H1 (cell line): ENCODE measurements at regions of chr11 and their contacts with region 1.

Region 1: GRCh38 chr11:17846852-17847453 is 112.4 kb downstream of the KCNC1 start:
- DNase-seq: no peak
- H3K4me3 ChIP-seq: no peak overlapping the region
- H3K27ac ChIP-seq: no peak overlapping the region
- H3K4me1 ChIP-seq: peaks cover 0 to 4% (median under 1%) of the 10 kb centered on the region in 4 experiments; a peak in 3 of 7 replicates
- H3K27me3 ChIP-seq: no peaks in the 10 kb centered on the region
- CTCF ChIP-seq: peak in 1 of 3 experiments; percentile 14; a peak in 1 of 4 replicates
- EP300 ChIP-seq: no peak
- POLR2A ChIP-seq: no peak
- RAD21 ChIP-seq: peak; percentile 17 to 44; a peak in 1 of 4 replicates

Region 2: GRCh38 chr11:17613428-17613962 is 233.5 kb before region 1 on chr11:
- CTCF ChIA-PET with region 1: no interaction called
- POLR2A ChIA-PET with region 1: no interaction called
- DNase-seq: no peak
- H3K4me3 ChIP-seq: no peak overlapping the region
- H3K27ac ChIP-seq: no peak overlapping the region
- H3K4me1 ChIP-seq: no peaks in the 10 kb centered on the region
- H3K27me3 ChIP-seq: 0 out of 7 replicates have a peak, but pooled peaks cover 0 to 2% (median 0%) of the 10 kb centered on the region in 4 experiments
- CTCF ChIP-seq: no peak
- EP300 ChIP-seq: no peak
- POLR2A ChIP-seq: no peak
- RAD21 ChIP-seq: no peak

Region 3: DNA sequence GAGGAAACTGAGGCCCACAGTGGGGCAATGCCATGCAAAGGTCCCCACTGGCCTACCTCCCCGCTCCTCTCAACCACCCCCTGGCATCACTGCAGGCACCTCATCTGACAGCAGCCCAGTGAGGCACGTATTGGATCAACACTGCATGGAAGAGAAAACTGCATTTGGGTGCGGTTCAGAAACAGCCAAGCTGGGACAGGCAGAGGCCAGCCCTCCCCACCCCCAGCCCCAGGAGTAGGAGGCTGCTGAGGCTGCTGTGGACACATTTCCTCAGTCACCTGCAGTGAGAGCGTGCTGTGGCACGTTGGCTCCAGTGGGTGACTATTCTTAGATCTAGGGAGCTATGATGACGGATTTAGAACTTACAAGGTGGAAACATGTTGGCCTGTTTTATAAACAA is 48.7 kb before region 1 on chr11:
- CTCF ChIA-PET with region 1: no interaction called
- POLR2A ChIA-PET with region 1: no interaction called
- DNase-seq: no peak
- H3K4me3 ChIP-seq: no peak overlapping the region
- H3K27ac ChIP-seq: no peak overlapping the region
- H3K4me1 ChIP-seq: peaks cover 0 to 6% (median 4%) of the 10 kb centered on the region in 4 experiments; a peak in 5 of 7 replicates
- H3K27me3 ChIP-seq: no peaks in the 10 kb centered on the region; a peak in 1 of 7 replicates
- CTCF ChIP-seq: no peak
- EP300 ChIP-seq: no peak
- POLR2A ChIP-seq: no peak
- RAD21 ChIP-seq: no peak

Region 4: GRCh38 chr11:17821648-17822400 is 25.1 kb before region 1 on chr11:
- CTCF ChIA-PET with region 1: interaction called, 23 read pairs
- POLR2A ChIA-PET with region 1: no interaction called
- DNase-seq: no peak
- H3K4me3 ChIP-seq: no peak overlapping the region
- H3K27ac ChIP-seq: no peak overlapping the region
- H3K4me1 ChIP-seq: 0 out of 7 replicates have a peak, but pooled peaks cover 0 to 2% (median 0%) of the 10 kb centered on the region in 4 experiments
- H3K27me3 ChIP-seq: no peaks in the 10 kb centered on the region
- CTCF ChIP-seq: no peak
- EP300 ChIP-seq: no peak
- POLR2A ChIP-seq: no peak
- RAD21 ChIP-seq: no peak

Region 5: GRCh38 chr11:17873586-17873985 is 26.6 kb after region 1 on chr11:
- CTCF ChIA-PET with region 1: interaction called, 13 read pairs
- POLR2A ChIA-PET with region 1: no interaction called
- DNase-seq: no peak
- H3K4me3 ChIP-seq: no peak overlapping the region
- H3K27ac ChIP-seq: 0 out of 2 replicates have a peak overlapping the region, but pooled peaks have one; percentile 6
- H3K4me1 ChIP-seq: peaks cover 0 to 3% (median 3%) of the 10 kb centered on the region in 4 experiments; a peak in 1 of 7 replicates
- H3K27me3 ChIP-seq: no peaks in the 10 kb centered on the region
- CTCF ChIP-seq: no peak
- EP300 ChIP-seq: no peak
- POLR2A ChIP-seq: no peak
- RAD21 ChIP-seq: no peak

Region 6: DNA sequence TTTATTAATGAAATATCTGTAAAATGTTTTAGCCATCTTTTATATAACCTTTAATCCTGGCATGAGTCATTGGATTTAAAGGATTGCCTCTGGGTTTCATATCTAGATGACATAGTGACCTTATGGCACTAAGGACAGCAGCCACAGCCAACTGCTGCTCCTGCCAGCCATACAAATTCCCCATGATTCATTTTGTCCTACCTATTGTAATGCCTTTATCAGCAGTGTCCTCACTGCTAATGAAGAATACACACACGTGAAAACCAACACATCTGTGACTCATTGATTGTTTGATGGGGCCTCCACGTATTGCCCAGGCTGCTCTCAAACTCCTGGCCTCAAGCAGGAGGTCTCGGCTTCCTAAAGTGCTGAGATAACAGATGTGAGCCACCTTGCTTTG is 610.5 kb after region 1 on chr11:
- CTCF ChIA-PET with region 1: no interaction called
- POLR2A ChIA-PET with region 1: no interaction called
- DNase-seq: no peak
- H3K4me3 ChIP-seq: no peak overlapping the region
- H3K27ac ChIP-seq: no peak overlapping the region
- H3K4me1 ChIP-seq: no peaks in the 10 kb centered on the region
- H3K27me3 ChIP-seq: no peaks in the 10 kb centered on the region
- CTCF ChIP-seq: no peak
- EP300 ChIP-seq: no peak
- POLR2A ChIP-seq: no peak
- RAD21 ChIP-seq: no peak